Activated CD4-positive, alpha-beta memory T cell treated with anti-CD3 and anti-CD28 coated beads for 36 hours (primary cell): ENCODE measurements at regions of chr11 and their contacts with region 1.

Region 1: GRCh38 chr11:82900277-82901164 is at the start of gene PRCP:
- DNase-seq: peak; percentile 97
- H3K4me3 Mint-ChIP-seq: peak within 1 kb of the TSS; percentile 98
- H3K27ac Mint-ChIP-seq: peak within 1 kb of the TSS; percentile 95
- H3K4me1 Mint-ChIP-seq: peaks cover 40% of the 10 kb centered on the region
- H3K27me3 Mint-ChIP-seq: no peaks in the 10 kb centered on the region
- total RNA-seq, gene PRCP: 26.7 to 27.0 TPM

Region 2: GRCh38 chr11:82867495-82868082 is 32.9 kb before region 1 on chr11:
- CTCF ChIA-PET with region 1: interaction called, 51 read pairs
- POLR2A ChIA-PET with region 1: interaction called, 4 read pairs
- intact Hi-C with region 1: loop called (anchors 1 kb)
- DNase-seq: peak; percentile 68
- H3K4me3 Mint-ChIP-seq: no peak overlapping the region
- H3K27ac Mint-ChIP-seq: no peak overlapping the region
- H3K4me1 Mint-ChIP-seq: peaks cover 12% of the 10 kb centered on the region
- H3K27me3 Mint-ChIP-seq: no peaks in the 10 kb centered on the region

Region 3: GRCh38 chr11:82883853-82884252 is 16.7 kb before region 1 on chr11:
- CTCF ChIA-PET with region 1: no interaction called
- POLR2A ChIA-PET with region 1: no interaction called
- intact Hi-C with region 1: no loop called
- DNase-seq: no peak
- H3K4me3 Mint-ChIP-seq: no peak overlapping the region
- H3K27ac Mint-ChIP-seq: no peak overlapping the region
- H3K4me1 Mint-ChIP-seq: no peaks in the 10 kb centered on the region
- H3K27me3 Mint-ChIP-seq: no peaks in the 10 kb centered on the region

Region 4: GRCh38 chr11:82927254-82927880 is 26.8 kb after region 1 on chr11:
- CTCF ChIA-PET with region 1: interaction called, 12 read pairs
- POLR2A ChIA-PET with region 1: no interaction called
- intact Hi-C with region 1: no loop called
- DNase-seq: no peak
- H3K4me3 Mint-ChIP-seq: no peak overlapping the region
- H3K27ac Mint-ChIP-seq: no peak overlapping the region
- H3K4me1 Mint-ChIP-seq: peaks cover 14% of the 10 kb centered on the region
- H3K27me3 Mint-ChIP-seq: no peaks in the 10 kb centered on the region

Region 5: GRCh38 chr11:82978422-82979099 is 78.0 kb after region 1 on chr11:
- CTCF ChIA-PET with region 1: no interaction called
- POLR2A ChIA-PET with region 1: no interaction called
- intact Hi-C with region 1: loop called (anchors 1 kb)
- DNase-seq: no peak
- H3K4me3 Mint-ChIP-seq: no peak overlapping the region
- H3K27ac Mint-ChIP-seq: peak overlapping the region; percentile 16
- H3K4me1 Mint-ChIP-seq: peaks cover 38% of the 10 kb centered on the region
- H3K27me3 Mint-ChIP-seq: no peaks in the 10 kb centered on the region

Region 6: DNA sequence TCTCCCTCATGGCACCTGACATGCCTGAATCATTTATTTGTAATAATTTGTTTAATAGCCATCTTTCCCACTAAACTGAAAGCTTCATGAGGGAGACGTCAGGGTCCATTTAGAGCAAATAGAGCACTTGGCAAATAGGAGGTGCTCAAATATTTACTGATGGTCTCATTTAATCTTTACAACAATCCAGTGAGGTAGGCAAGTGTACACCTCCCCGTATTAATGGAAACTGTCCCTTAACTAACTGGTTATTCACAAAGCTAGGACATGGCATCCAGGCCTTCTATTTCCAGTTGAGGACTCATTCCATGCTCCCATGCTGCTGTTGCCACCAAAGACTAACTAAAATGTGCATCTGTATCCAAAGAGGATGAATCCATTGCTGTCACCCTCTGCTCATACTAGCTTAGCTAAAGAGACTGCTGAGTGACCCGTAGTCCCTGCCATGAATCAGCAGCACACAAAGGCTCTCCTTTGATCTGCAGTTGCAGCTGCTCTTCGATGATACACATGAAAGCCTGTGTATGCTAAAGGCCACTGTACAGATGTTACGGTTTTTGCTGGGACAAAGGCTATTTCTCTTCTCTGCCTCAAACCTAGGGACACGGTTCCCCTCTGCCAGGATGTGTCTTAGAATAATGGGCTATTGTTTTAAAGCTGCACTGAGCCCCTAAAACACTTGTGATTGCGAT is 88.6 kb after region 1 on chr11:
- CTCF ChIA-PET with region 1: no interaction called
- POLR2A ChIA-PET with region 1: no interaction called
- intact Hi-C with region 1: no loop called
- DNase-seq: no peak
- H3K4me3 Mint-ChIP-seq: no peak overlapping the region
- H3K27ac Mint-ChIP-seq: no peak overlapping the region
- H3K4me1 Mint-ChIP-seq: peaks cover 8% of the 10 kb centered on the region
- H3K27me3 Mint-ChIP-seq: no peaks in the 10 kb centered on the region

Region 7: GRCh38 chr11:83071567-83072349 is 171.2 kb after region 1 on chr11 and contains the start of gene RAB30:
- CTCF ChIA-PET with region 1: interaction called, 3 read pairs
- POLR2A ChIA-PET with region 1: interaction called, 20 read pairs
- intact Hi-C with region 1: loop called (anchors 1 kb)
- DNase-seq: peak; percentile 96
- H3K4me3 Mint-ChIP-seq: no peak within 1 kb of the TSS
- H3K27ac Mint-ChIP-seq: no peak within 1 kb of the TSS
- H3K4me1 Mint-ChIP-seq: peaks cover 29% of the 10 kb centered on the region
- H3K27me3 Mint-ChIP-seq: no peaks in the 10 kb centered on the region
- total RNA-seq, gene RAB30: 11.5 to 12.9 TPM

Region 8: GRCh38 chr11:83193315-83194280 is 293.1 kb after region 1 on chr11 and contains the start of gene ANKRD42:
- CTCF ChIA-PET with region 1: interaction called, 6 read pairs
- POLR2A ChIA-PET with region 1: interaction called, 12 read pairs
- intact Hi-C with region 1: loop called (anchors 1 kb)
- DNase-seq: peak; percentile 93
- H3K4me3 Mint-ChIP-seq: peak within 1 kb of the TSS; percentile 99
- H3K27ac Mint-ChIP-seq: peak within 1 kb of the TSS; percentile 98
- H3K4me1 Mint-ChIP-seq: peaks cover 38% of the 10 kb centered on the region
- H3K27me3 Mint-ChIP-seq: no peaks in the 10 kb centered on the region
- total RNA-seq, gene ANKRD42: 3.8 to 5.4 TPM

Region 9: DNA sequence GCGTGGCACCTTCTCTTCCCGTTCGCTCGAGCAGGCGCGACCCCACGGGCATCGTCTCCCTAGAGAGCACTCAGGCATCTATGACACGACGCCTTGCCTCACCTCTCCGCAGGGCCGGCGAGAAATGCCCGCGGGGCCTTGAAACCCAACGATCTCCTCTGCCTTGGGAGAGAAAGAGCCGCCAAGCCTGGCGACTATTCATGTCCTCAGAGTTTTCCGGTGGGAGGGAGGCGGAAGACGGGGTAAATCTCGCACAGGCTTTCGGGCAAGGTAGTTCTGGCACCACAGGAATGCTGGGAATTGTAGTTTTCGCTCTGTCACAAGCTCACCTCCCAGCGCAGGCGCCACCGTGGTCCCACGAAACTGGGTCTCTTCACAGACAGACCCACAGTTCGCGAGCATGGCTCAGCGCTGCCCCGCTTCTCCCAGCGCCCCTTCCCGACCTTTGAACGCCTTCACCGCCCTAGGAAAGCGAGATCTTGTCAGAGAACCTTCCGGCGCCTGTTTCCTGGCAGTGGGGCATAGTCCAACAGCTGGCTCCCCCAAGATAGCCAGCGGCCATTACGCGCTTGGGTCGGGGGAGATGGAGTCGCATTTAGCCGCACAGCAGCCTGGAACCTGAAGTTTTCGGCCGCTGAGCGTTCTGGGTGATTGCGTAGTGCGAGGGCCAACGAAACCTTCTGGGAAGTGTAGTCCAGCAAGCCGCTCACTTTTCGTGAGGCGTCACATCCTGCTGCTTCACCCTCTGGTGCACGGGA is 385.4 kb after region 1 on chr11 and contains the start of gene CCDC90B:
- CTCF ChIA-PET with region 1: interaction called, 9 read pairs
- POLR2A ChIA-PET with region 1: interaction called, 20 read pairs
- intact Hi-C with region 1: loop called (anchors 1 kb)
- DNase-seq: peak; percentile 96
- H3K4me3 Mint-ChIP-seq: peak within 1 kb of the TSS; percentile 92
- H3K27ac Mint-ChIP-seq: peak within 1 kb of the TSS; percentile 99
- H3K4me1 Mint-ChIP-seq: peaks cover 35% of the 10 kb centered on the region
- H3K27me3 Mint-ChIP-seq: no peaks in the 10 kb centered on the region
- total RNA-seq, gene CCDC90B: 29.2 to 32.3 TPM